CD4-positive, alpha-beta T cell (primary cell): ENCODE measurements at regions of chr19 and their contacts with region 1.

Region 1: GRCh38 chr19:5031231-5032100 is 62.6 kb downstream of the KDM4B start:
- DNase-seq: peak; percentile 59 to 87 (median 78)
- ATAC-seq: peak; percentile 89
- H3K4me3 ChIP-seq: no peak overlapping the region
- H3K4me3 Mint-ChIP-seq: no peak overlapping the region
- H3K27ac ChIP-seq: no peak overlapping the region
- H3K27ac Mint-ChIP-seq: no peak overlapping the region
- H3K4me1 ChIP-seq: peaks cover 13% of the 10 kb centered on the region
- H3K4me1 Mint-ChIP-seq: no peaks in the 10 kb centered on the region
- H3K27me3 ChIP-seq: no peaks in the 10 kb centered on the region
- H3K27me3 Mint-ChIP-seq: no peaks in the 10 kb centered on the region
- CTCF ChIP-seq: peak; percentile 92

Region 2: DNA sequence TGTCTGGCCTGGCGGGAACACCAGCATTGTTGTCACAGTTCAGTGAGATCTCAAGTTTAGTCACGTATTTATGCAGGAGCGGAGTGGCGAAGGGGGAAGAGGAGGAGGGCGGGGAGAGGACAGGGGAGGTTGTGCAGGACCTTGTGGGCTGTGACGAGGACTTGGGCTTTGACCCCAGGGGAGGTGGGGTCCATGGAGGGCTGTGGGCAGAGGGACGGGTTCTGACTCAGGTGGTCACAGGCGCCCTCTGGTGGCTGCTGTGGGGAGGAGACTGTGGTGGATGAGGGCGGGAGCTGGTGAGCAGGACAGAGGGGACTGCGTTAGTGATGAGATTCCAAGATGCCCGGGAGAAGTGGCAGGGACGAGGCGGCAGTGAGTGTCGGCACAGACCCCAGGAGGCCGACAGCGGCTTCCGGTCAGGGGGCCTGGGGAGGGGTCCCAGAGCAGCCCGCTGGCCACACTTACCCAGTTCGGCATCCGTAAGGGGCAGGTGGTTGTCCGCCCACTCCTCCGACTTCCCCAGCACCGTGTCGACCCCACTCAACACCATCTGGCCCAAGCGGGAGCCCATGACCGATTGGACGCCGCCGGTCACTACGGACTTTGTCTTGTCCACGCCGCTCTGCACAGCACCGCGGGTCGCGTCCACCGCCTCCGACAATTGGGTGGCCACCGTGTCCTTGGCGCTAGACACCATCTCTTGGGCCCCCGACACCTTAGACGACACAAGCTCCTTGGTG is 179.7 kb before region 1 on chr19:
- CTCF ChIA-PET with region 1: no interaction called
- POLR2A ChIA-PET with region 1: no interaction called
- intact Hi-C with region 1: loop called in 1 of 2 experiments (anchors 1 kb)
- DNase-seq: peak; percentile 63 to 85 (median 70)
- ATAC-seq: peak; percentile 84
- H3K4me3 ChIP-seq: no peak overlapping the region
- H3K4me3 Mint-ChIP-seq: no peak overlapping the region
- H3K27ac ChIP-seq: no peak overlapping the region
- H3K27ac Mint-ChIP-seq: no peak overlapping the region
- H3K4me1 ChIP-seq: peaks cover 5% of the 10 kb centered on the region
- H3K4me1 Mint-ChIP-seq: no peaks in the 10 kb centered on the region
- H3K27me3 ChIP-seq: no peaks in the 10 kb centered on the region
- H3K27me3 Mint-ChIP-seq: no peaks in the 10 kb centered on the region
- CTCF ChIP-seq: peak; percentile 73

Region 3: DNA sequence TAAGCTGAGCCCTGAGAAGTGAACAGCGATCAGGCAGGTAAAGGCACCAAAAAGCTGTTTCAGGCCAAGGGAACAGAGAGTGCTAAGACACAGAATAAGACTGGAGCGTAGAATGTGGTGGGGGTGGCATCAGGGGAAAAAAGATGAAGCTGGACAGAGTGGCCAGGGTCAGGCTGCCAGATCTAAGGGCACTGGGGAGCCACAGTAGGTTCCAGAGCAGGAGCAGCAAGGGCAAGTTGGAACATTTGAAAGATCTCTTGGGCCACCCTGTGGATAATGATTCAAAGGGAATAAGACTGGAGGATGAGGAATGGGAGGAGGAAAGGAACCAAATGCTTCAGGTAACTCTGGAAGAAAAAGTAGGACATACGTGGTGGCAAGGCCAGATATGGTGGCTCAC is 157.5 kb before region 1 on chr19:
- CTCF ChIA-PET with region 1: interaction called, 11 read pairs
- POLR2A ChIA-PET with region 1: no interaction called
- intact Hi-C with region 1: loop called (anchors 1 kb)
- DNase-seq: no peak
- ATAC-seq: no peak
- H3K4me3 ChIP-seq: no peak overlapping the region
- H3K4me3 Mint-ChIP-seq: no peak overlapping the region
- H3K27ac ChIP-seq: no peak overlapping the region
- H3K27ac Mint-ChIP-seq: no peak overlapping the region
- H3K4me1 ChIP-seq: peaks cover 18% of the 10 kb centered on the region
- H3K4me1 Mint-ChIP-seq: peaks cover 4% of the 10 kb centered on the region
- H3K27me3 ChIP-seq: no peaks in the 10 kb centered on the region
- H3K27me3 Mint-ChIP-seq: peaks cover 11% of the 10 kb centered on the region
- CTCF ChIP-seq: no peak

Region 4: DNA sequence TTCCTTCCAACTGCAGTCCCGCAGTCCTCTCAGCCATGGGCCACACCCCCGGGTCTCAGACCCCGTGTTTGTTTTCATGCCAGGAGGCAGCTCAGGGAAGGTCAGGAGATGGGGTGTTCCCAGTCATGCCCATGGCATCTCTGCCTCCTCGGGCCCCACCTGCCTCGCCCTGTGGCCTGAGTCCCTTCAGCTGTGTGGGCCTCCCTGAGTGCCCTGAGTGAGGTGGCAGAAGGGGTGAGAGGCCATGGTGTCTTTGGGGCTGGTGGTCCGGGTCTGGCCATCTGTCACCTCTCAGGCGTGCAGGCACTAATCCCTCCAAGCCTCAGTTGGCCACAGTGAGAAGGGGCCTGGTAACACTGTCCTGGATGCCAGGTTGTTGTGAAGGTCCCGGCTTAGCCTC is 73.5 kb before region 1 on chr19:
- CTCF ChIA-PET with region 1: no interaction called
- POLR2A ChIA-PET with region 1: no interaction called
- intact Hi-C with region 1: no loop called
- DNase-seq: no peak
- ATAC-seq: no peak
- H3K4me3 ChIP-seq: no peak overlapping the region
- H3K4me3 Mint-ChIP-seq: no peak overlapping the region
- H3K27ac ChIP-seq: no peak overlapping the region
- H3K27ac Mint-ChIP-seq: no peak overlapping the region
- H3K4me1 ChIP-seq: no peaks in the 10 kb centered on the region
- H3K4me1 Mint-ChIP-seq: no peaks in the 10 kb centered on the region
- H3K27me3 ChIP-seq: no peaks in the 10 kb centered on the region
- H3K27me3 Mint-ChIP-seq: no peaks in the 10 kb centered on the region
- CTCF ChIP-seq: no peak

Region 5: GRCh38 chr19:5271141-5271540 is 239.7 kb after region 1 on chr19:
- CTCF ChIA-PET with region 1: no interaction called
- POLR2A ChIA-PET with region 1: no interaction called
- intact Hi-C with region 1: no loop called
- DNase-seq: peak in 1 of 14 experiments; percentile 2
- ATAC-seq: no peak
- H3K4me3 ChIP-seq: no peak overlapping the region
- H3K4me3 Mint-ChIP-seq: no peak overlapping the region
- H3K27ac ChIP-seq: no peak overlapping the region
- H3K27ac Mint-ChIP-seq: no peak overlapping the region
- H3K4me1 ChIP-seq: no peaks in the 10 kb centered on the region
- H3K4me1 Mint-ChIP-seq: no peaks in the 10 kb centered on the region
- H3K27me3 ChIP-seq: no peaks in the 10 kb centered on the region
- H3K27me3 Mint-ChIP-seq: no peaks in the 10 kb centered on the region
- CTCF ChIP-seq: no peak